Activated naive CD4-positive, alpha-beta T cell treated with anti-CD3 and anti-CD28 coated beads for 36 hours (primary cell): ENCODE measurements at regions of chr15 and their contacts with region 1.

Region 1: DNA sequence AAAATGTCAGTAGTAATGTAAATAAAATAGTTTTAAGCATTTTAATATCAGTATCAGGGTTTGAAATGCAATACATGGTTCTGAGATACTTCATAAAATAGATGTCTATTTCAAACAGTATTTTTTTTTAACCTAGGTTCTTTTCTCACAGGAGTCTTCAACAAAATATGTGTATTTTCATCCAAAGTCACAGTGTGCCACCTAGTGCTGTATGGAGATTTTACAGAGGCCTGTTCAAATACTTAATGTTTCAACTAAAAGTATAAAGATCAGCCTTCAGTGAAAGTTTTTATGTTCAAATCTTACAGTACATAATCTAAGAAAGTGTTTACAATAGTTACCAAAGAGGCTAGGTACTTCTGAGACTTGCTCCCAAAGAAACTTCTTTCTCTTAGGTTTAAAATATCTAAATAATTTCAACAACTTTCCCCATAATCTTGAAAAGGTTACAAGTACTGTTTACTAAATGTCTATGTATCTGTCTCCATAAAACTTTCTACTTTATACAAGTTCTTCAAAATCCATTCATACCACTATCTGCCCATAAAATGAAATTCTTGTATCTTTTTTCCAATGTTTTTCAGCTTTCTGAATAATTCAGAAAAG is 38.3 kb downstream of the SCAPER start:
- DNase-seq: peak; percentile 45
- H3K4me3 Mint-ChIP-seq: no peak overlapping the region
- H3K27ac Mint-ChIP-seq: no peak overlapping the region
- H3K4me1 Mint-ChIP-seq: peaks cover 40% of the 10 kb centered on the region
- H3K27me3 Mint-ChIP-seq: no peaks in the 10 kb centered on the region

Region 2: GRCh38 chr15:76190834-76191538 is 675.8 kb before region 1 on chr15:
- CTCF ChIA-PET with region 1: no interaction called
- intact Hi-C with region 1: loop called (anchors 1 kb)
- DNase-seq: peak; percentile 83
- H3K4me3 Mint-ChIP-seq: no peak overlapping the region
- H3K27ac Mint-ChIP-seq: no peak overlapping the region
- H3K4me1 Mint-ChIP-seq: peaks cover 13% of the 10 kb centered on the region
- H3K27me3 Mint-ChIP-seq: peaks cover 56% of the 10 kb centered on the region

Region 3: DNA sequence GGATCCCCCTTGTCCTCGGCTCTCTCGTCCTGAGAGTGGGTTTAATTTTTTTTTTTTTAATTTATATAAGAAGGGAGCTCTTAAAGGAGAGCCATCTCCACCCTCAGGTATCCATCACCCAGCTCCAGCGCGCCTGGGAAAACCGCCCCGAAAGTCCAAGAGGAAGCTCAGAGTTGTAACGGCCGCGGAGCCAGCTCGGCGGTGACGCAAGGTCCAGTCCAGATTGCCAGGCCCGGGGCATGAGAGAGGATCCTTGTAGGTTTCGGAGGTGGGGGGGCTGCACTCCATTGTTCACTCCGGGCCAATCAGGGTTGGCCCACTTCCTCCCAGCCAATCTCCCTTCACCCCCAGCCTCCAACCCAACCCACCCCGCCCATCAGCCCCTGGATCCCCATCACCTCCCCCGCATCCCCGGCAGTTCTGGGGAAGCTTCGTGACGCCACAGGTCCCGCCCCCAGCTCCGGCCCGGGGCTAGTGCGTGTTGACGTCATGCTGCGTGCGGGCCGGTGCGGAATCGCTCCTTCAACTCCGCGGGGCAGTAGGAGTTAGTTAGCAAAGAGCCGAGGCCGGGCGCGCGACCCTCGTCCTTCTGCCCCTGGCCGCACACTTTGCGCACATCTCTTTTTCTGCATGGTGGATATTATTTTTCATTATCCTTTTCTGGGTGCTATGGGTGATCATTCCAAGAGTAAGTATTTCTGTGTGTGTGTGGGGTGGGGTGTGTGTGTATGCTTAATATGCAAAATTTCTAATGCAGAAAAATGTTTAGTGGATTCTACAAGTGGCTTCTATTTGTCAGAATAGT is 530.4 kb before region 1 on chr15 and contains the start of gene ISL2:
- CTCF ChIA-PET with region 1: no interaction called
- intact Hi-C with region 1: loop called (anchors 10 kb)
- DNase-seq: peak; percentile 66
- H3K4me3 Mint-ChIP-seq: peak within 1 kb of the TSS; percentile 73
- H3K27ac Mint-ChIP-seq: no peak within 1 kb of the TSS
- H3K4me1 Mint-ChIP-seq: peaks cover 42% of the 10 kb centered on the region
- H3K27me3 Mint-ChIP-seq: peaks cover 73% of the 10 kb centered on the region
- total RNA-seq, gene ISL2: not detected

Region 4: DNA sequence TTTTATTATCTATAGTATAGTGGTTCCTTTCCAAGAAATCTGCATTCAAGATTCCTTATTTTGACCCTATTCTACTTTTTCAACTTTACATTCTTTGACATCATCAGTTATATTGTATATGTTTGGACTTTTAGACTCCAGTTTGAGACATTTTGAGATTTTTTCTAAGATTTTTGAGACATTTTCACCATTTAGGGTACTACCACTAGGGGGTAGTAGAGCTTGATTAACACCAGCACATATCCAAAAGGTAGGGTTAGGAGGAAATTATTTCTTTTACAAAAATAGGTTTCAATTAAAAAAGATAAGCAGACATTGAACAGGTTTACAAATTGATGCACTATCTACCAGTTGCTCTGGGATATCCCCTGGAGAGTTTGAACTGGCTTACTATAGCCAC is 224.1 kb before region 1 on chr15:
- CTCF ChIA-PET with region 1: no interaction called
- intact Hi-C with region 1: loop called (anchors 10 kb)
- DNase-seq: no peak
- H3K4me3 Mint-ChIP-seq: no peak overlapping the region
- H3K27ac Mint-ChIP-seq: no peak overlapping the region
- H3K4me1 Mint-ChIP-seq: no peaks in the 10 kb centered on the region
- H3K27me3 Mint-ChIP-seq: no peaks in the 10 kb centered on the region

Region 5: DNA sequence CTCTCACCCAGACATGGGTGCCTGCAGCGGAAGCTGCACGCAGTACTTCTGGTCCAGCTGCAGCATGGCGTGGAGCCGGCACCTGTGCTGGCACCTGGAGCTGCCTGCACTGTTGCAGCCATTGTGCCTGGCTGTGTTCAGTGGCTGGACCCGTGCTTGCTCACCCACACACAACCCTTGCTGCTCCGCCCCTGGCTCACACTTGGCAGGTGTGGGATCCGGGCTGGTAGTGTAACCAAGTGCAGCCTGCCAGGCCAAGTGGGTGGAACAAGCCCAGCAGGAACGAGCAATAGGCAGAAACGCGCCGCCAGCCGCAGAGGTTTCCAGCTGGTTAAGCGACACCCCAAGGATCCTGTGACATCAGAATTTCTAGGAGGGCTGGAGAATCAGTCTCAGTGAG is 49.5 kb after region 1 on chr15:
- CTCF ChIA-PET with region 1: no interaction called
- intact Hi-C with region 1: no loop called
- DNase-seq: no peak
- H3K4me3 Mint-ChIP-seq: no peak overlapping the region
- H3K27ac Mint-ChIP-seq: no peak overlapping the region
- H3K4me1 Mint-ChIP-seq: no peaks in the 10 kb centered on the region
- H3K27me3 Mint-ChIP-seq: peaks cover 4% of the 10 kb centered on the region